Naive thymus-derived CD8-positive, alpha-beta T cell (primary cell): ENCODE measurements at regions of chr17 and their contacts with region 1.

Region 1: DNA sequence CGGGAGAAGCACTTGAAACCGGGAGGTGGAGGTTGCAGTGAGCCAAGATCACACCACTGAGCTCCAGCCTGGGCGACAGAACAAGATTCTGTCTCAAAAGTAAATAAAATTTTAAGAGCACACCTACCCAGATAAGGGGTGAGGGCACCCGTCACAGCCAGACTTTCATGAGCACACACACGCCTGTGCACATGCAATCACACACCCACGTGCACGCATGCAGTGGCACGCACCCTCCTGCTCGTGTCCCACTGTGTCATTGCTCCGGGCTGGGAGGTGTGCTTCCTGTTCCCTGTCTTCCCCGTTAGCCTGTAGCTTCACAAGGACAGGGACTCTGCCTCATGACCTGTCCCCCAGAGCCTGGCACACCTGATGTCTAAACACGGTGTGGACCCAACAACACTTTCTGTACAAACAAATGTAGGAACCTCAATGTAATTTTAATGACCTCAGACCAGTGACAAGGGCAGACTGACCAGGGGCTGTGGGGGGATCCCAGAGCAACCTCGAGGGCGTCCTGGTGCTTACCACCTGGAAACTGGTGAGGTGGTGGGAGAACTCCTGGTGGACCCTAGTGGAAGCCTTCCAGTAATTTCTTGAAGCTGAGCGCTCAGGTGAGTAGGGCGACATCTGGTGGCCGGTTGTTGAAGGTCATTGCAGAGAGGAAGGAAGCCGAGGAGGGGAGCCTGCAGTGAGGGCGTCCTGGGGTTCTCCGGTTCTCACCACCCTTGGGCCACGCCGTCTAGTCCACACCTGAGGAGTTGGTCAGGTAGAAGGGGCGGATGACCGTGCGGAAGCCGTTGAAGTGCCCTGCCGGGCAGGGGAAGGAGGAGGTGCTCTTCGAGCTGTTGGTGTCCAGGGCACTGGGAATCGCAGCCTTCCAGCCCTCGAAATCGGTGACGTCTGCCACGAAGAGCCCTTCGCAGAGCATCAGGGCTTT is 8.6 kb downstream of the LGALS3BP start:
- DNase-seq: peak; percentile 63 to 88 (median 73)
- ATAC-seq: peak; percentile 82 to 94
- H3K4me3 Mint-ChIP-seq: peak overlapping the region in 1 of 10 donors; percentile 1
- H3K27ac Mint-ChIP-seq: peak overlapping the region in 8 of 10 donors; percentile 49 to 89 (median 82)
- H3K4me1 Mint-ChIP-seq: peaks cover 9 to 20% (median 12%) of the 10 kb centered on the region in 4 donors
- H3K27me3 Mint-ChIP-seq: no peaks in the 10 kb centered on the region

Region 2: GRCh38 chr17:78865682-78866390 is 105.3 kb before region 1 on chr17:
- POLR2A ChIA-PET with region 1: interaction called, 11 read pairs
- DNase-seq: peak; percentile 33 to 77 (median 59)
- ATAC-seq: peak; percentile 64 to 76
- H3K4me3 Mint-ChIP-seq: peak overlapping the region in 1 of 10 donors; percentile 12
- H3K27ac Mint-ChIP-seq: peak overlapping the region in 2 of 10 donors; percentile 17 to 43
- H3K4me1 Mint-ChIP-seq: peaks cover 0 to 7% (median 5%) of the 10 kb centered on the region in 4 donors
- H3K27me3 Mint-ChIP-seq: peaks cover 0 to 2% (median 0%) of the 10 kb centered on the region in 5 donors

Region 3: DNA sequence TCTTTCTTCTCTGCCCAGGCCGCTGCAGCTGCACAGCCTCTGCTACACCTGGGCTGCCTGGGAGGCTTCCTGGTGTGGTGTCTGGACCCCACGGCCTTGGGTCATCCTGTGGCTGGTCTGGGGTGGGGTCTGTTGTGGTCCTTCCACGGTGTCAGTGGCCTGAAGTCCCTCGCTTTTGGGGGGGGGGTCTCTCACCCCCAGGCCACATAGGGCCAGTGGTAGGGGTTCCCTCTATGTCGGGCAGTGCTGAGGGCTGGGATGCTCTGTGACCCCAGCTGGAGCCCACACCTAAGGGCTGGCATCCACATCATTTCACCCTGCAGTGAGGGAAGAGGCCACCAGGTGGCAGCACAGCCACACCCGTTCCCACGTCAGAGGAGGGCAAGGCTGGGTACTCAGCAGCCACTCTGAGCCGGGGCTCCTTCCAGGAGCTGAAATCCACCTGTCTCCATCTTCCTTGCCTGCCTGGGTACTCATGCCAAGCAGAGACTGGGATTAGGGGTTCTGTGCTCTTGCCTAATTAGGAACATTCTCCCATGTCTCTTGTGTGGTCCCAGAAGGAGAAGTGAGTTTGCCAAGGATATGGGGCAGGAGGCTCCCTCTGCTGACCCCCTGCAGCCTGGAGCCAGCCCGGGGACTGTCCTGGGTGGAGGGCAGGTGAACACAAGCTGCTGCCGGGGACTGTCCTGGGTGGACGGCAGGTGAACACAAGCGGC is 116.5 kb after region 1 on chr17:
- POLR2A ChIA-PET with region 1: no interaction called
- DNase-seq: peak; percentile 48 to 82 (median 70)
- ATAC-seq: peak; percentile 88 to 91
- H3K4me3 Mint-ChIP-seq: no peak overlapping the region
- H3K27ac Mint-ChIP-seq: no peak overlapping the region
- H3K4me1 Mint-ChIP-seq: peaks cover 0 to 6% (median under 1%) of the 10 kb centered on the region in 4 donors
- H3K27me3 Mint-ChIP-seq: peaks cover 0 to 6% (median 2%) of the 10 kb centered on the region in 5 donors